ENCODE measurements at regions of chr6 and their contacts with region 1.

Region 1: DNA sequence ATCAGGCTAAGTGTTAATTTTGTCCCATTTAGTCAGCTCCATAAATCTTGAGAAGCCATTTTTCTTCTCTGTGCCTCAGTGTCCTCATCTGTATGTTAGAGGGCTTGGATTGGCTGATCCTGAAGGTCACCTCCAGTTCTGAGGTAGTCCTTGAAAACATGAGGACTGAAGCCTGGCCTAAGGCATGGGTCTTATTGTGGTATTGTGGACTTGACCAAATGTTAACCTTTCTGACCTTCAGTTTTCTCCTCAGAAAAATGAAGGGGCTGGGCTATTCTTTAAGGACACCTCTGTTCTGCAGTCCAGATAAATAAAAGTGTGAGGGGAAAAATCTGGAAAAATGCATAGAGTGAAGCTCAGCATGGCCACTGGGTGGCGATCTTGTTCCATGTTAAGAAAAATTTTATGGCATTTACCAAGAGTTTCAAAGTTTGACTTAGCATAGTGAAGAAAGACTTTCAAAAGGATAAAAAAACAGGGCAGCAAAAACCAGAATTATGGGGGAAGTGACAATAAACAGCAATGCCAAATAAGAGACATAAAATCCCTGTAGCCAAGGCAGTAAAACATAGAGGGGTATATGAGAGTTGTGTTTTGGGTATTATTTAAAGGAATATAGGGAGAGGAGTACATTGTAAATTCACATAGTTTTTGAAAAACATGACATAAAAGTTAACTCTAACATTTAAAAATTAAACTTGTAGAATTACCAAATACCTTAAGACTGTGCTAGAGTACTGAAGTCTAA is 13.2 kb upstream of the TFB1M start:
- DNase-seq: peak; percentile 55
- ATAC-seq: peak; percentile 78
- H3K4me3 ChIP-seq: no peak overlapping the region
- H3K27ac ChIP-seq: no peak overlapping the region
- H3K4me1 ChIP-seq: no peaks in the 10 kb centered on the region
- H3K27me3 ChIP-seq: no peaks in the 10 kb centered on the region
- CTCF ChIP-seq: peak; percentile 63 to 85 (median 76); a peak in 5 of 6 replicates
- POLR2A ChIP-seq: no peak
- RAD21 ChIP-seq: peak; percentile 94

Region 2: DNA sequence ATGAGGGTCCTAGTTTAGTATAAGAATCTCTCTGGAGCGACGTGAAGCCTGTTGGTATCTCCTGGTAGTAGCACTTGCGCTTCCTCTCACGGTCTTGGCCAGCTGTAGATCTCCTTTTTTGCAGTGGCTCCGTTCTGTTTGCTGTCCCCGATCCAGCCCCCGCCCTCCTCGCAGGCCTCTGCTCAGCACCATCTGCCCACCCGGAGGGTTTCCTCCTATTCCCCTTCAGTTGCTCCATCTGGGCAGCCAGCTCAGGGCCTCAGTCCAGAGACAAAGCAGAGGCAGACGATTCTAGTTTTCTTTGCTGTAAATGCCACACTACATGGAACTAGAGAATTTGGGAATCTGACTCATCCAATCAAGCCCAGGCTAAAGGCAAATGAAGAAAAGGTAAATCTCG is 205.8 kb before region 1 on chr6:
- CTCF ChIA-PET with region 1: no interaction called
- POLR2A ChIA-PET with region 1: no interaction called
- RAD21 ChIA-PET with region 1: no interaction called
- intact Hi-C with region 1: no loop called
- DNase-seq: no peak
- ATAC-seq: no peak
- H3K4me3 ChIP-seq: no peak overlapping the region
- H3K27ac ChIP-seq: no peak overlapping the region
- H3K4me1 ChIP-seq: peaks cover 5 to 20% of the 10 kb centered on the region in 2 experiments; a peak in 3 of 4 replicates
- H3K27me3 ChIP-seq: no peaks in the 10 kb centered on the region
- CTCF ChIP-seq: no peak
- POLR2A ChIP-seq: no peak
- RAD21 ChIP-seq: no peak

Region 3: GRCh38 chr6:155530219-155530834 is 202.8 kb after region 1 on chr6:
- CTCF ChIA-PET with region 1: interaction called, 7 read pairs
- POLR2A ChIA-PET with region 1: no interaction called
- RAD21 ChIA-PET with region 1: no interaction called
- intact Hi-C with region 1: loop called (anchors 1 kb)
- DNase-seq: peak; percentile 27
- ATAC-seq: peak; percentile 79
- H3K4me3 ChIP-seq: no peak overlapping the region
- H3K27ac ChIP-seq: no peak overlapping the region
- H3K4me1 ChIP-seq: peaks cover 0 to 3% of the 10 kb centered on the region in 2 experiments; a peak in 2 of 4 replicates
- H3K27me3 ChIP-seq: no peaks in the 10 kb centered on the region
- CTCF ChIP-seq: peak; percentile 63 to 70 (median 69); a peak in 5 of 6 replicates
- POLR2A ChIP-seq: no peak
- RAD21 ChIP-seq: peak; percentile 81

Region 4: DNA sequence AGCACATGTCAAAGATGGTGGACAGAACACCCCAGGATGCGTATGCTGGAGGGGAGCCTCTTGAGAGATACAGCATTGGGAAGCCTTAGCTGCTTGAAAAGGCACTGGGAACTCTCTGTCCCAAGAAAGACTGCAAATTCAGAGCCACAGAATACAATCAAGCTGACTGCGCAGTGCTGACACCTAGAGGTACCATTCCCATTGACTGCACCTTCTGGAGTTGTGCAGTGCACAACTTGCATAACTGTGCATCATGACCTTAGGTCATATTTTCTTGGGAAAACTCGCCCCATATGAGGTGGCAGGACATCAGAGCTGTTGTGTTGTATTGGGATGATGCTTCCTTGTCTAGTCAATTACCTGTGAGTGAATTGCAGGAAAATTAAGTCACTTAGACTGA is 774.6 kb after region 1 on chr6:
- CTCF ChIA-PET with region 1: no interaction called
- POLR2A ChIA-PET with region 1: no interaction called
- RAD21 ChIA-PET with region 1: no interaction called
- intact Hi-C with region 1: loop called (anchors 5 kb)
- DNase-seq: peak; percentile 21
- ATAC-seq: peak; percentile 94
- H3K4me3 ChIP-seq: no peak overlapping the region
- H3K27ac ChIP-seq: no peak overlapping the region
- H3K4me1 ChIP-seq: no peaks in the 10 kb centered on the region
- H3K27me3 ChIP-seq: no peaks in the 10 kb centered on the region
- CTCF ChIP-seq: peak; percentile 40 to 71 (median 68); a peak in 5 of 6 replicates
- POLR2A ChIP-seq: no peak
- RAD21 ChIP-seq: peak; percentile 73

Region 5: GRCh38 chr6:156406099-156406498 is 1078.6 kb after region 1 on chr6:
- CTCF ChIA-PET with region 1: no interaction called
- POLR2A ChIA-PET with region 1: no interaction called
- RAD21 ChIA-PET with region 1: no interaction called
- intact Hi-C with region 1: loop called (anchors 5 kb)
- DNase-seq: no peak
- ATAC-seq: no peak
- H3K4me3 ChIP-seq: no peak overlapping the region
- H3K27ac ChIP-seq: no peak overlapping the region
- H3K4me1 ChIP-seq: no peaks in the 10 kb centered on the region
- H3K27me3 ChIP-seq: no peaks in the 10 kb centered on the region
- CTCF ChIP-seq: no peak
- POLR2A ChIP-seq: no peak
- RAD21 ChIP-seq: no peak

Region 6: DNA sequence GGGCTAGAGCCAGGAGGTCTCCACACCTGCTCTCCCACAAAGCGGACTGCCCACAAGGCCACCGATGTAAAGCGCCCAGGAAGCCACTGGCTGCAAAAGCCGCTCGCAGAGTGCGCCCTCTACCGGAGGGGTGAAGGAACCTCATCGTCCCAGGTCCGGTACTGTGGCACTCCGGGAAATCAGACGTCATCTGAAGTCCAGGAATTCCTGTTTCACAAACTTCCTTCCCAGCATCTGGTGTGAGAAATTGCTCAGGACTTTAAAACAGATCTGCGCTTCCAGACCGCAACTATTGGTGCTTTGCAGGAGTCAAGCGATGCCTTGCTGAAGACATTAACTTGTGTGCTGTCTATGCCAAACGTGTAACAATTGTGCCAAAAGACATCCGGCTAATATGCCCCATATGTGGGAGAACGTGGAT is 1334.5 kb after region 1 on chr6:
- CTCF ChIA-PET with region 1: no interaction called
- POLR2A ChIA-PET with region 1: no interaction called
- RAD21 ChIA-PET with region 1: no interaction called
- intact Hi-C with region 1: loop called (anchors 10 kb)
- DNase-seq: peak; percentile 73
- ATAC-seq: peak; percentile 100
- H3K4me3 ChIP-seq: peak overlapping the region; percentile 43 to 54
- H3K27ac ChIP-seq: no peak overlapping the region
- H3K4me1 ChIP-seq: peaks cover 0 to 7% of the 10 kb centered on the region in 2 experiments; a peak in 1 of 4 replicates
- H3K27me3 ChIP-seq: no peaks in the 10 kb centered on the region
- CTCF ChIP-seq: peak; percentile 78 to 97 (median 93)
- POLR2A ChIP-seq: no peak
- RAD21 ChIP-seq: peak; percentile 83

Region 7: GRCh38 chr6:157045831-157046454 is 1718.4 kb after region 1 on chr6:
- CTCF ChIA-PET with region 1: interaction called, 3 read pairs
- POLR2A ChIA-PET with region 1: no interaction called
- RAD21 ChIA-PET with region 1: no interaction called
- intact Hi-C with region 1: loop called (anchors 5 kb)
- DNase-seq: peak; percentile 41
- ATAC-seq: peak; percentile 81
- H3K4me3 ChIP-seq: no peak overlapping the region
- H3K27ac ChIP-seq: no peak overlapping the region
- H3K4me1 ChIP-seq: peaks cover 0 to 3% of the 10 kb centered on the region in 2 experiments; a peak in 1 of 4 replicates
- H3K27me3 ChIP-seq: no peaks in the 10 kb centered on the region
- CTCF ChIP-seq: peak; percentile 55 to 67 (median 67)
- POLR2A ChIP-seq: no peak
- RAD21 ChIP-seq: peak; percentile 60

Region 8: GRCh38 chr6:157184202-157185020 is 1856.9 kb after region 1 on chr6:
- CTCF ChIA-PET with region 1: no interaction called
- POLR2A ChIA-PET with region 1: no interaction called
- RAD21 ChIA-PET with region 1: no interaction called
- intact Hi-C with region 1: loop called (anchors 1 kb)
- DNase-seq: peak; percentile 16
- ATAC-seq: peak; percentile 93
- H3K4me3 ChIP-seq: no peak overlapping the region
- H3K27ac ChIP-seq: no peak overlapping the region
- H3K4me1 ChIP-seq: peaks cover 12 to 23% of the 10 kb centered on the region in 2 experiments; a peak in 3 of 4 replicates
- H3K27me3 ChIP-seq: no peaks in the 10 kb centered on the region
- CTCF ChIP-seq: peak; percentile 84 to 94 (median 93)
- POLR2A ChIP-seq: no peak
- RAD21 ChIP-seq: peak; percentile 94